ENCODE measurements at regions of chr3 and their contacts with region 1.

Region 1: DNA sequence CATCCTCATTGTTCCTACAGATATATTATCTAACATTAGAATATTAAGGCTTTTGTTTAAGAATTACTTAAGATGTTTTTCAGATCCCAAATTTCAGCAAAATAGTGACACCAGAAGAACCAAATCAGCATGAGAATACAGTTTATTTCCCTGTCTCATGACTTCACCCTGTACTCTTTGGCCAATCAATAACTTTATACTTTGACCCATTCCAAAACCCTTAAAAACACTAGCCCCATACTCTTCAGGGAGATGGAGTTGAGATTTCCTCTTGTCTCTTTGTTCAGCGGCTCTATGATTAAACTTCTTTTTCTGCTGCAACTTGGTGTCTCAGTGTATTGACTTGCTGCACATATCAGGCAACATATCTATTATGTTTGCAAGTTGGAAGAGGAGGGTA is 207.7 kb downstream of the ZBBX start:
- DNase-seq: no peak
- H3K4me3 Mint-ChIP-seq: no peak overlapping the region
- H3K27ac Mint-ChIP-seq: no peak overlapping the region
- H3K4me1 Mint-ChIP-seq: no peaks in the 10 kb centered on the region
- H3K27me3 Mint-ChIP-seq: no peaks in the 10 kb centered on the region

Region 2: GRCh38 chr3:167151636-167152035 is 20.7 kb before region 1 on chr3:
- intact Hi-C with region 1: loop called (anchors 1 kb)
- DNase-seq: no peak
- H3K4me3 Mint-ChIP-seq: no peak overlapping the region
- H3K27ac Mint-ChIP-seq: no peak overlapping the region
- H3K4me1 Mint-ChIP-seq: no peaks in the 10 kb centered on the region
- H3K27me3 Mint-ChIP-seq: no peaks in the 10 kb centered on the region

Region 3: GRCh38 chr3:167705840-167706239 is 533.5 kb after region 1 on chr3:
- intact Hi-C with region 1: no loop called
- DNase-seq: no peak
- H3K4me3 Mint-ChIP-seq: no peak overlapping the region
- H3K27ac Mint-ChIP-seq: no peak overlapping the region
- H3K4me1 Mint-ChIP-seq: peaks cover 9% of the 10 kb centered on the region
- H3K27me3 Mint-ChIP-seq: no peaks in the 10 kb centered on the region